HEK293 (cell line): ENCODE measurements at regions of chr15 and their contacts with region 1.

Region 1: GRCh38 chr15:79028411-79028964 is 62.1 kb downstream of the RASGRF1 start:
- H3K4me3 ChIP-seq: no peak overlapping the region
- H3K27ac ChIP-seq: no peak overlapping the region
- H3K4me1 ChIP-seq: no peaks in the 10 kb centered on the region
- CTCF ChIP-seq: peak; percentile 55

Region 2: GRCh38 chr15:78893538-78893937 is 134.9 kb before region 1 on chr15:
- CTCF ChIA-PET with region 1: no interaction called
- POLR2A ChIA-PET with region 1: no interaction called
- H3K4me3 ChIP-seq: no peak overlapping the region
- H3K27ac ChIP-seq: no peak overlapping the region
- H3K4me1 ChIP-seq: no peaks in the 10 kb centered on the region
- CTCF ChIP-seq: no peak

Region 3: DNA sequence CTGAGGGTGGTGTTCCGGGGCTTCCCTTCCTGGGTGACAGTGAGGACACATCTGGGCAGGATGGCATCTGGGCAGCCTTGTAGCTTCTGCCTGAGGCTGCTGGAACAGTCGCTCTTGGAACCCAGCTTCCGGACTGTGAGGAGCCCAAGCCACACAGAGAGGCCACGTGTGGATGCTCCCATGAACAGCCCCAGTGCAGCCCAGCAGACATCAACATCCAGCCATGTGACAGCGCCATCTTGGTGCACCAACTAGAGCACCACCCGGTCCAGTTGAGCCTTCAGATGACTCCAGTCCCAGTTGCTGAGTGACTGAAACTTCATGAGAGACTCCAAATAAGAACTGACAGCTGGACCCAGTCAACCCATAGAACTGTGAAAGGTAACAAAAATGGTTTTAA is 68.2 kb before region 1 on chr15:
- CTCF ChIA-PET with region 1: no interaction called
- POLR2A ChIA-PET with region 1: no interaction called
- H3K4me3 ChIP-seq: no peak overlapping the region
- H3K27ac ChIP-seq: no peak overlapping the region
- H3K4me1 ChIP-seq: no peaks in the 10 kb centered on the region
- CTCF ChIP-seq: no peak

Region 4: GRCh38 chr15:79049416-79049815 is 20.9 kb after region 1 on chr15:
- CTCF ChIA-PET with region 1: interaction called, 14 read pairs
- POLR2A ChIA-PET with region 1: no interaction called
- H3K4me3 ChIP-seq: no peak overlapping the region
- H3K27ac ChIP-seq: no peak overlapping the region
- H3K4me1 ChIP-seq: no peaks in the 10 kb centered on the region
- CTCF ChIP-seq: no peak

Region 5: DNA sequence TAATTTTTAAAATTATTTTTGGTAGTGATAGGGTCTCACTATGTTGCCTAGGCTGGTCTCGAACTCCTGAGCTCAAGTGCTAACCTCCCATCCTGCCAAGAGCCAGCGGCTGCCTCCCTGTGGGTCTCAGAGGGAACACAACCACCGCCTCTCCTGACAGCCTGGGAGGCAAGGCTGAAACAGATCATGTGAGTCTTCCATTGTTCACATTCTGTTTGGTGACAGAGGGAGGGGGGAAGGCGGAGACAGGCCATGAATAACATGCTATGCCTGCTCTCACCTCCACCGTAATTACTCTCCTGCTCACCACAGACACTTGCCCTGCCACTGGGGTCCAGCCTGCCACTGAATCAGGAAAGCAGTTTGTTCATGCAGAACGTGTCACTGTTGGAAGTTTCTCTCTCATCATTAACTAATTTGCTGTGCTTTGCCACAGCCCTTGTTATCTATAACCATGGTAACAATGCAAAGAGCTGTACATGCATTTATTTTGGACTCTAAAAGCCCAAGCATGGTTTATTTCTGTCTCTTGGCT is 140.5 kb after region 1 on chr15:
- CTCF ChIA-PET with region 1: interaction called, 18 read pairs
- POLR2A ChIA-PET with region 1: no interaction called
- H3K4me3 ChIP-seq: no peak overlapping the region
- H3K27ac ChIP-seq: no peak overlapping the region
- H3K4me1 ChIP-seq: peaks cover 18% of the 10 kb centered on the region
- CTCF ChIP-seq: peak; percentile 37; the same call in 1 of the 2 replicates

Region 6: DNA sequence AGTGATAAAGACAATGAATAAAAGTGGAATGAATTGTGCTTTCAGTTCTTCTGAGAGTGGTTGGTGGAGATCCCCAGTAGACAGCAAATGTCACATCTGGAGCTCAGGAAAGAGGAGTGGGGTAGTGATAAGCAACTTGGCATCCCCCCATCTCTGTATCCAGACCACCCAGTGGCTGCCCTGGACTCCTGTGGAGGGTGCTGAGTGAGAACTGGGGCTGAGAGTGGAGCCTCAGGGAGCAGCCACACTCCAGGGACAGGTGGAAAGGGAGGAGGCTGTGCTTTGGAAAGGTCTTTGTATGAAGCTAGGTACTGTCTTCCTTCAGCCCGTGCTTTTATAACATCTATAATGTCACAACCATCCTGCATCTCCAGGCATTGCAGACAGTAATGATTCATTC is 147.7 kb after region 1 on chr15:
- CTCF ChIA-PET with region 1: interaction called, 455 read pairs
- POLR2A ChIA-PET with region 1: no interaction called
- H3K4me3 ChIP-seq: no peak overlapping the region
- H3K27ac ChIP-seq: no peak overlapping the region
- H3K4me1 ChIP-seq: peaks cover 14% of the 10 kb centered on the region
- CTCF ChIP-seq: no peak

Region 7: DNA sequence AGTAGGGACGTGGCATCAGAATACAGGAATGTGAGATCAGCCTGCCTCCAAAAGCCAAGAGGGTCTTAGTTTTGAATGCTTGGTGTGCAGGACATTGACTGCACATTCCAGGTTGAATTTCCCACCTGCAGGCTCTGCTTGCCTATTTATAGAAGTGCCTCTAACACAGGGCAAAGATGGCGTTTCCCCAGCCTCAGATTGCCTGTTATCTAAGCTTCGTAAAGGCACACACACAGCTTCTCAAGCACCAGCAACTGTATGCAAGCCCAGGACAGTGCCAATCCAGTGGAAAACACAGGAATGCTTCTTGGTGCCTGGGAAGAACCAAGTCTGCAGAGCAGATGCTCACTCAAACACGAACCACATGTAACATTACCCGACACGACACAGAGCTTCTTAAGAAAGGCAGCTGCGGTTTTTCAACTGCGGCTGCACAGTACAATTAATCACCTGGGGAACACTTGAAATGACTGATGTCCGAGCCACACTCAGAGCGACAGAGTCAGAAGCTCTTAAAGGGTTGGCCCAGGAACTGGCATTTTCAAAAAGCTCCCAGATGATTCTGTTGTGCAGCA is 164.1 kb after region 1 on chr15:
- CTCF ChIA-PET with region 1: interaction called, 455 read pairs
- POLR2A ChIA-PET with region 1: no interaction called
- H3K4me3 ChIP-seq: no peak overlapping the region
- H3K27ac ChIP-seq: no peak overlapping the region
- H3K4me1 ChIP-seq: 0 out of 2 replicates have a peak, but pooled peaks cover 5% of the 10 kb centered on the region
- CTCF ChIP-seq: no peak

Region 8: DNA sequence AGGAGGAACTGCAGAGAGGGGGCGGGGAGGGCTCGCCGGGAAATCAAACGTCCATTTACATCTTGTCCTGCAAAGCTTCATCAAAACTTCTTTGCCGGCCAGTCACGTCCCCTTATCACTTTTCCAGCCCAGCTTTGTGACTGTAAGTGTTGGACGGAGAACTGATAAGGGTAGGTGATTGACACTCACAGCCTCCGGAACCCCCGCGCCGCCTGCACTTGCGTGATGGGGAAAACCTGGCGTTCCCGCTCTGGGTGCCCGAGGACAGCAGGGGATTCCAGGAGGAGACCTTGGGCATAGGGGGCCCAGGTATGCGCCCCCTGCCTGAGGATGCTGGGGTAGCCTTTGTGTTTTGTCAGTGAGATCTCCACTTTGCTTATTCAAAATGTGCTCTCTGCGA is 181.2 kb after region 1 on chr15:
- CTCF ChIA-PET with region 1: interaction called, 21 read pairs
- POLR2A ChIA-PET with region 1: no interaction called
- H3K4me3 ChIP-seq: no peak overlapping the region
- H3K27ac ChIP-seq: no peak overlapping the region
- H3K4me1 ChIP-seq: no peaks in the 10 kb centered on the region
- CTCF ChIP-seq: no peak

Region 9: GRCh38 chr15:79455361-79455760 is 426.9 kb after region 1 on chr15:
- CTCF ChIA-PET with region 1: no interaction called
- POLR2A ChIA-PET with region 1: no interaction called
- H3K4me3 ChIP-seq: no peak overlapping the region
- H3K27ac ChIP-seq: no peak overlapping the region
- H3K4me1 ChIP-seq: no peaks in the 10 kb centered on the region
- CTCF ChIP-seq: no peak